AG04450 (cell line): ENCODE measurements at regions of chr6 and their contacts with region 1.

Region 1: DNA sequence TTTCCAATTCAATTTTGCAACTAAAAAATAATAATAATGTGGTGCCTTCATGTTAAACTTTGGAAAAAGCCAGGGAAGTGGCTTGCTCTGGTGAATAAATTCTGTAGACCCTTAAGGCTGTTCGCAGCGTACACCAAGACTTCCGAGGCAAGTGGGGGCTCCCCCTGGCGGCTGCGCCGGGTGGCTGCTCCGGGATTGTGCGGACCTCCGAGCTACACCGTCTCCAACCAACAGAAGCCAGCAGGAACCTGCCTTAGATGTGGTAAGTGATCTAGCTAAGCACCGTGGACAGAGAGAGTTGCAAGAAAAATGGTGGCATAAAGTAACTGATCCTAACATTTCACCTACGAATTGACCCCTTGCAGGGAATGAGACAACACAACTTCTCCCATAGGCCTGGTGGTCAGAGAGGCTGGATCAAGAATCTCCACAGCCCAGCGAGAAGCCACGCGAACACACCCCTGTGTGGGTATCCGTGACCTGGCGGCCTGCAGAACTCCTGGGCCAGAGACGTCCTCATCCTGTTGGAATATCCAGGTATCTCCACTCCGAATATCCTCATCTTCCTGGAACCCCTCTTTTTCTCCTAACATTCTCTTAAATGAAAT is 69.6 kb downstream of the TBXT start:
- DNase-seq: peak; percentile 59
- H3K4me3 ChIP-seq: peak overlapping the region; percentile 42
- H3K27ac ChIP-seq: no peak overlapping the region
- H3K27me3 ChIP-seq: peaks cover 8% of the 10 kb centered on the region
- CTCF ChIP-seq: peak; percentile 97

Region 2: GRCh38 chr6:165884813-165885765 is 212.9 kb before region 1 on chr6:
- CTCF ChIA-PET with region 1: interaction called, 36 read pairs
- POLR2A ChIA-PET with region 1: interaction called, 3 read pairs
- DNase-seq: peak; percentile 45
- H3K4me3 ChIP-seq: no peak overlapping the region
- H3K27ac ChIP-seq: no peak overlapping the region
- H3K27me3 ChIP-seq: no peaks in the 10 kb centered on the region
- CTCF ChIP-seq: peak; percentile 96